MCF 10A (cell line): ENCODE measurements at regions of chr16 and their contacts with region 1.

Region 1: DNA sequence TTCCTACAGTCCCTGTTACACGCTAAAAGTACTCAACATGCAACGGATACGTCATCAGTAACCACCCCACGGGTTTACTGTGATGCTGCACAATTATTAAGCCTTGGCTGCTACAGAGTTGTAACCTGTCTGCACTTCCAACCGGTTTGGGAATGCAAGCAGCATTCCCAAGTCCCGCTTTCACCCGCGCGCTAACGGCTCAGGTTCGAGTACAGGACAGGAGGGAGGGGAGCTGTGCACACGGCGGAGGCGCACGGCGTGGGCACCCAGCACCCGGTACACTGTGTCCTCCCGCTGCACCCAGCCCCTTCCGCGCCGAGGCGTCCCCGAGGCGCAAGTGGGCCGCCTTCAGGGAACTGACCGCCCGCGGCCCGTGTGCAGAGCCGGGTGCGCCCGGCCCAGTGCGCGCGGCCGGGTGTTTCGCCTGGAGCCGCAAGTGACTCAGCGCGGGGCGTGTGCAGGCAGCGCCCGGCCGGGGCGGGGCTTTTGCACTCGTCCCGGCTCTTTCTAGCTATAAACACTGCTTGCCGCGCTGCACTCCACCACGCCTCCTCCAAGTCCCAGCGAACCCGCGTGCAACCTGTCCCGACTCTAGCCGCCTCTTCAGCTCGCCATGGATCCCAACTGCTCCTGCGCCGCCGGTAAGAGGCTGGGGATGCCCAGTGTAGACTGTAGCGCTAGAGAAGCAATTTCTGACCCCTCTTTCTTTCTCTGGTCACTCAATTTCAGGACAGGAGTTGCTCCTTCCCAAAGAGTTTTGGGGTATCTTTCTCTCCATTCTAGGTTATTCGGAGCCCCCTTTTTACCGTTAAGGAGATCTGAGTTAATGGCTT is at the start of gene MT2A:
- DNase-seq: peak; percentile 97
- H3K4me3 Mint-ChIP-seq: peak within 1 kb of the TSS; percentile 93
- H3K27ac Mint-ChIP-seq: peak within 1 kb of the TSS; percentile 99
- H3K4me1 Mint-ChIP-seq: peaks cover 50% of the 10 kb centered on the region
- H3K27me3 Mint-ChIP-seq: no peaks in the 10 kb centered on the region
- CTCF ChIP-seq: no peak
- total RNA-seq, gene MT2A: 2,490 and 3,582 TPM in 2 replicates

Region 2: DNA sequence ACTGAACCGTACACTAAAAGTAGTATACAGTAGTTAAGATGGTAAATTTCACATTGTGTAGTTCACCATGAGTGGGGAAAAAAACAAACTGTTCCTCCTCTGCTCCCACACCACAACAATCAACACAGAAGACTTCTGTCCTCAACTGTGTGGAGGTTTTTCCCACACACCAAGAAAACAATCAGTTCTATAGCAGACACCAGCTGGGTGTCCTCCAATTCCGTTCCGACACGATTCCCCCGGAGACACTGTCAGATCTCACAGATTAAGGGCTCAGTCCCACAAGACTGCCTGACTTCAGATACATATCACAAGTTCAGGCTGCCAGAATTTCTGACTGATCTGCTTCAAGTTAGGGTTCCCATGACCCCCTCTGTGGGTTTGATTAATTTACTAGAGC is 120.2 kb before region 1 on chr16:
- CTCF ChIA-PET with region 1: no interaction called
- POLR2A ChIA-PET with region 1: no interaction called
- intact Hi-C with region 1: no loop called
- DNase-seq: no peak
- H3K4me3 Mint-ChIP-seq: no peak overlapping the region
- H3K27ac Mint-ChIP-seq: no peak overlapping the region
- H3K4me1 Mint-ChIP-seq: no peaks in the 10 kb centered on the region
- H3K27me3 Mint-ChIP-seq: no peaks in the 10 kb centered on the region
- CTCF ChIP-seq: no peak

Region 3: GRCh38 chr16:56519459-56520250 is 88.6 kb before region 1 on chr16 and contains the start of gene BBS2:
- CTCF ChIA-PET with region 1: interaction called, 72 read pairs
- POLR2A ChIA-PET with region 1: interaction called, 85 read pairs
- intact Hi-C with region 1: no loop called
- DNase-seq: peak; percentile 83
- H3K4me3 Mint-ChIP-seq: peak within 1 kb of the TSS; percentile 81
- H3K27ac Mint-ChIP-seq: peak within 1 kb of the TSS; percentile 83
- H3K4me1 Mint-ChIP-seq: peaks cover 29% of the 10 kb centered on the region
- H3K27me3 Mint-ChIP-seq: no peaks in the 10 kb centered on the region
- CTCF ChIP-seq: no peak
- total RNA-seq, gene BBS2: 23.9 and 25.8 TPM in 2 replicates

Region 4: DNA sequence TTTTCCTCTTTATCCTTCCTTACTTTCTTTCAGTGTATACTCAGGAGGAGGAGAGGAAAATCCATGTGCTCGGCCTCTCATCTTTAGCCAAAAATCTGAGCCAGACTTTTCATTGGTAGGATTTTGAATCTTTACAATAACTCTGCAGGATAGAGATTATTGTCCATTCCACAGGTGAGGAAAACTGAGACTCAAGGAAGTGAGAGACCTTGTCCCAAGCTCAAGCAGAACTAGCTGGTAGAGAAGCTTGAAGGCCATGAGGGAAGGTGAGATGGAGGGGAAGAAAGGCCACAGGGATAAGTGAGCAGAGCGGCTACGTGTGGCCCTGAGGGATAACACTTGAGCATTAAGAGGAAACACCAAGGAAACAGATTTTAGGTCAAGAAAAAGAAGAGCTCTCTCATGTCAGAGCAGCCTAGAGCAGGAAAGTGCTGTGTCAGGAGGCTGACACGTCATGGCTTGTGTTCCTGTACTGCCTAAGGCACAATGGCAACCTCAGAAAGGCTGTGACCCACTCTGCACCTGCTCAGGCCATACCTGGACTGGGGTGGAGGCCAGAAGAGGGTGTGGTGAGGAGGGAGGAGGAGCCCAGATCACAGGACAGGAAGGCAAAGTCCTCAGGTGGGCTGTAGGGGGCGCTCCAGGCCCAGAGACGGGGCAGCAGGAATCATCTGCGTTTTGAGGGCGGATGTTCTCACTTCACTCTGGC is 31.5 kb before region 1 on chr16:
- CTCF ChIA-PET with region 1: interaction called, 27 read pairs
- POLR2A ChIA-PET with region 1: interaction called, 12 read pairs
- intact Hi-C with region 1: no loop called
- DNase-seq: peak; percentile 92
- H3K4me3 Mint-ChIP-seq: no peak overlapping the region
- H3K27ac Mint-ChIP-seq: peak overlapping the region; percentile 17
- H3K4me1 Mint-ChIP-seq: peaks cover 10% of the 10 kb centered on the region
- H3K27me3 Mint-ChIP-seq: no peaks in the 10 kb centered on the region
- CTCF ChIP-seq: peak; percentile 92

Region 5: GRCh38 chr16:56643080-56643778 is 35.0 kb after region 1 on chr16:
- CTCF ChIA-PET with region 1: interaction called, 3 read pairs
- POLR2A ChIA-PET with region 1: interaction called, 9 read pairs
- intact Hi-C with region 1: loop called (anchors 5 kb)
- DNase-seq: peak; percentile 86
- H3K4me3 Mint-ChIP-seq: peak overlapping the region; percentile 25
- H3K27ac Mint-ChIP-seq: no peak overlapping the region
- H3K4me1 Mint-ChIP-seq: peaks cover 3% of the 10 kb centered on the region
- H3K27me3 Mint-ChIP-seq: no peaks in the 10 kb centered on the region
- CTCF ChIP-seq: peak; percentile 62

Region 6: DNA sequence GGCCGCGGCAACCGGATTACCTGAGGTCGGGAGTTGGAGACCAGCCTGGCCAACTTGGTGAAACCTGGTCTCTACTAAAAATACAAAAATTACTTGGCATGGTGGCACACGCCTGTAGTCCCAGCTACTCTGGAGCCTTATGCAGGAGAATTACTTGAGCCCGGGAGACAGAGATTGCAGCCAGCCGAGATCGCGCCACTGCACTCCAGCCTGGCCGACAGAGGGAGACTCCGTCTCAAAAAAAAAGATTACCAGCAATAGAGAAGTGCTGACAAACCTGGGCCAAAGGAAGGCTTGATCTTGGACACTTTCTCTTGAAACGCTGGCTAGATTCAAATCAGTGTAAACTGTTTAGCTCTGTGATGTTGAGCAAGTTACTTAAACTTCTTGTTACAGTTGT is 65.7 kb after region 1 on chr16:
- CTCF ChIA-PET with region 1: interaction called, 3 read pairs
- POLR2A ChIA-PET with region 1: interaction called, 793 read pairs
- intact Hi-C with region 1: no loop called
- DNase-seq: no peak
- H3K4me3 Mint-ChIP-seq: no peak overlapping the region
- H3K27ac Mint-ChIP-seq: no peak overlapping the region
- H3K4me1 Mint-ChIP-seq: no peaks in the 10 kb centered on the region
- H3K27me3 Mint-ChIP-seq: peaks cover 1% of the 10 kb centered on the region
- CTCF ChIP-seq: peak; percentile 28

Region 7: GRCh38 chr16:56691885-56692284 is 83.6 kb after region 1 on chr16:
- CTCF ChIA-PET with region 1: interaction called, 4 read pairs
- POLR2A ChIA-PET with region 1: interaction called, 793 read pairs
- intact Hi-C with region 1: no loop called
- DNase-seq: peak; percentile 96
- H3K4me3 Mint-ChIP-seq: no peak overlapping the region
- H3K27ac Mint-ChIP-seq: peak overlapping the region; percentile 73
- H3K4me1 Mint-ChIP-seq: peaks cover 17% of the 10 kb centered on the region
- H3K27me3 Mint-ChIP-seq: no peaks in the 10 kb centered on the region
- CTCF ChIP-seq: no peak